ENCODE measurements at regions of chr16 and their contacts with region 1.

Region 1: GRCh38 chr16:75011634-75012307 is 12.9 kb downstream of the ZNRF1 start:
- DNase-seq: peak; percentile 92
- ATAC-seq: peak; percentile 91
- H3K4me3 ChIP-seq: peak overlapping the region; percentile 60
- H3K27ac ChIP-seq: peak overlapping the region; percentile 96
- H3K4me1 ChIP-seq: peaks cover 47% of the 10 kb centered on the region
- H3K27me3 ChIP-seq: no peaks in the 10 kb centered on the region
- CTCF ChIP-seq: no peak
- EP300 ChIP-seq: peak; percentile 89
- POLR2A ChIP-seq: peak; percentile 64
- RAD21 ChIP-seq: no peak

Region 2: DNA sequence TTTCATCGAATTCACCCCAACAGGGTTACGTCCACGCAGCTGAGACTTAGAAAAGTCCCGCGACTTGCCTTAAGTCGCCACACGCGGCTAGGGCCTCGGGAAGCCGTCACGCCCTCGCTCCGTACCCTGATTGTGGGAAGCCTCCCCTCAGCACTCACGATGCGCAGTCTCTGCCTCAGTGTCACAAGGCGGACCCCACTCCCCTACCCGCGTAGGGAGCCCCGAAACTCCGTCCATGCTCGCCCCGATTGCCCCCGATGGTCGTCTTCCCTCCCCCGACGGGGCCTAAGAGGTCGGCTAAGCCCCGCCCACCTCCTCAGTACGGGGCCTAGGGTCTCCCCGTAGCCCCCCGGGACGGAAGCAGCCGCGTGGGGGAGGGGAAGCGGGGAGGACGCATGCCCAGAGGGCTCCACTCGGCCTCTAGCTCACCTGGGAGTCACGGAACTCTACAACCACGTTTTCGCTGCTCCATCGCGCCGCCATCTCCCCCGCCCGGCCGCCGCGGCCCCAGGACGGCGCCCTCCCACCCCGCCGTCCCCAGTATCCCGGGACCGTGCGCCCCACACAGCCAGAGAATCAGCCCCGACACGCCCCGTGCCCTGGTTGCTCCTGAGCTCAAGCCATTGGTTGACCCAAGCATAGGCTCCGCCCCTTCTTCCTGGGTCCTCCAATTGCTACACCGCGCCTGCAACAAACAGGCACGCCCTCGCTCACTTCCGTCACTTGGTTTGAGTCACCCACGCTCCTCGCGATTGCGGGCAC is 27.1 kb before region 1 on chr16 and contains the start of gene WDR59:
- CTCF ChIA-PET with region 1: interaction called, 5 read pairs
- POLR2A ChIA-PET with region 1: interaction called, 10 read pairs
- RAD21 ChIA-PET with region 1: interaction called, 11 read pairs
- SMC1A ChIA-PET with region 1: interaction called, 10 read pairs
- in situ Hi-C with region 1: no loop called
- intact Hi-C with region 1: no loop called
- DNase-seq: peak; percentile 96
- ATAC-seq: peak; percentile 99
- H3K4me3 ChIP-seq: peak within 1 kb of the TSS; percentile 99
- H3K27ac ChIP-seq: peak within 1 kb of the TSS; percentile 92
- H3K4me1 ChIP-seq: no peaks in the 10 kb centered on the region; the same call in 1 of the 2 replicates
- H3K27me3 ChIP-seq: no peaks in the 10 kb centered on the region
- CTCF ChIP-seq: no peak
- EP300 ChIP-seq: no peak
- POLR2A ChIP-seq: peak; percentile 83
- RAD21 ChIP-seq: no peak
- polyA plus RNA-seq, gene WDR59: 9.7 to 11.5 TPM

Region 3: DNA sequence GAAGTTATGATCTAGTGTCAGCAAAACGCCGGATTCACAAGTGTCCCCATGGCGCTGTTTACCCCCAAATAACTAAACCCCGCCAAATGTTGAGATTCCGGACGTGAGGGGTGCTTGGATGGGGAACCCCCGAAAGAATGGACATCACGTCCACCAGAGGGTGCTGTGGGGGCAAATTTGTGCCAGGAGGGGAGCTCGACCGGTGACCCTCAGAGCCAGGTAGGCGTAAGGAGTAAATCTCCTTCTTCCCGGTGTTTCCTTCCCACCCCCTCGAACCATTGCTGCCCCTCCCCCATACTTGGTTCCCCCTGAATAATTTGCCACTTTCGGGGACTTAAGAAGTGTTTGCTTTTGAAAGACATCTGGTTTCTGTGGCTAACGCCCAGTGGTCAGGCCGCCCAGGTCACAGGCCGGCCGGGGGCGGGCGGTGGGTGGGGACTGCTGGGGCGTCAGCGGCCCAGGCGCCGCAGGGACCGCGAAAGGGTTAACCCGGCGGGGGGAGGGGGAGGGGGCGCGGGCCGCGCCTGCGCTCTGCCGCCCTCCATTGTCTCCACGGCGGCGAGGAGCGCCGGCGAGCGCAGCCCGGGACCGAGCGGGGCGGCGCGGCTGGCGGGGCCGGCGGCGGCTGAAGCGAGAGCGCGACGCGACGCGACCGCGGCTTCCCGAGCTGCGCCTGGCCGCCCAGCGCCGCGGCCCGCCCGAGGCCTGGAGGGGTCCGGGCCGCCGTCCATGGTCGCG is 13.1 kb before region 1 on chr16 and contains the start of gene ZNRF1:
- CTCF ChIA-PET with region 1: interaction called, 12 read pairs
- POLR2A ChIA-PET with region 1: interaction called, 20 read pairs
- RAD21 ChIA-PET with region 1: interaction called, 38 read pairs
- SMC1A ChIA-PET with region 1: interaction called, 43 read pairs
- in situ Hi-C with region 1: no loop called
- intact Hi-C with region 1: no loop called
- DNase-seq: peak; percentile 73
- ATAC-seq: peak; percentile 82
- H3K4me3 ChIP-seq: peak within 1 kb of the TSS; percentile 72
- H3K27ac ChIP-seq: no peak within 1 kb of the TSS
- H3K4me1 ChIP-seq: peaks cover 8% of the 10 kb centered on the region
- H3K27me3 ChIP-seq: no peaks in the 10 kb centered on the region
- CTCF ChIP-seq: peak; percentile 60 to 72 (median 62); a peak in 5 of 6 replicates
- EP300 ChIP-seq: peak; percentile 33 to 81; a peak in 3 of 4 replicates
- POLR2A ChIP-seq: peak; percentile 58
- RAD21 ChIP-seq: peak; percentile 86
- polyA plus RNA-seq, gene ZNRF1: 12.0 to 14.2 TPM

Region 4: GRCh38 chr16:75029557-75030253 is 17.9 kb after region 1 on chr16:
- CTCF ChIA-PET with region 1: interaction called, 3 read pairs
- POLR2A ChIA-PET with region 1: interaction called, 16 read pairs
- RAD21 ChIA-PET with region 1: no interaction called
- SMC1A ChIA-PET with region 1: interaction called, 5 read pairs
- in situ Hi-C with region 1: no loop called
- intact Hi-C with region 1: no loop called
- DNase-seq: no peak
- ATAC-seq: peak; percentile 32
- H3K4me3 ChIP-seq: no peak overlapping the region
- H3K27ac ChIP-seq: no peak overlapping the region
- H3K4me1 ChIP-seq: peaks cover 18% of the 10 kb centered on the region
- H3K27me3 ChIP-seq: no peaks in the 10 kb centered on the region
- CTCF ChIP-seq: no peak
- EP300 ChIP-seq: no peak
- POLR2A ChIP-seq: no peak
- RAD21 ChIP-seq: no peak

Region 5: GRCh38 chr16:75043175-75043895 is 31.6 kb after region 1 on chr16:
- CTCF ChIA-PET with region 1: interaction called, 4 read pairs
- POLR2A ChIA-PET with region 1: interaction called, 4 read pairs
- RAD21 ChIA-PET with region 1: interaction called, 5 read pairs
- SMC1A ChIA-PET with region 1: interaction called, 13 read pairs
- in situ Hi-C with region 1: no loop called
- intact Hi-C with region 1: no loop called
- DNase-seq: peak; percentile 59
- ATAC-seq: peak; percentile 93
- H3K4me3 ChIP-seq: no peak overlapping the region; the same call in 1 of the 2 replicates
- H3K27ac ChIP-seq: 0 out of 2 replicates have a peak overlapping the region, but pooled peaks have one; percentile 5
- H3K4me1 ChIP-seq: peaks cover 27% of the 10 kb centered on the region
- H3K27me3 ChIP-seq: no peaks in the 10 kb centered on the region
- CTCF ChIP-seq: no peak
- EP300 ChIP-seq: no peak
- POLR2A ChIP-seq: no peak
- RAD21 ChIP-seq: no peak

Region 6: GRCh38 chr16:75074920-75075687 is 63.3 kb after region 1 on chr16:
- CTCF ChIA-PET with region 1: interaction called, 9 read pairs
- POLR2A ChIA-PET with region 1: interaction called, 5 read pairs
- RAD21 ChIA-PET with region 1: interaction called, 3 read pairs
- SMC1A ChIA-PET with region 1: interaction called, 10 read pairs
- in situ Hi-C with region 1: no loop called
- intact Hi-C with region 1: loop called (anchors 5 kb)
- DNase-seq: peak; percentile 96
- ATAC-seq: peak; percentile 97
- H3K4me3 ChIP-seq: peak overlapping the region; percentile 41; the same call in 1 of the 2 replicates
- H3K27ac ChIP-seq: peak overlapping the region; percentile 80
- H3K4me1 ChIP-seq: peaks cover 21% of the 10 kb centered on the region
- H3K27me3 ChIP-seq: no peaks in the 10 kb centered on the region
- CTCF ChIP-seq: no peak
- EP300 ChIP-seq: peak; percentile 16 to 22; a peak in 2 of 4 replicates
- POLR2A ChIP-seq: peak; percentile 58
- RAD21 ChIP-seq: 0 out of 2 replicates have a peak, but pooled peaks have one; percentile 18

Region 7: GRCh38 chr16:75130150-75130771 is 118.5 kb after region 1 on chr16:
- CTCF ChIA-PET with region 1: no interaction called
- POLR2A ChIA-PET with region 1: no interaction called
- RAD21 ChIA-PET with region 1: no interaction called
- SMC1A ChIA-PET with region 1: no interaction called
- in situ Hi-C with region 1: no loop called
- intact Hi-C with region 1: no loop called
- DNase-seq: no peak
- ATAC-seq: no peak
- H3K4me3 ChIP-seq: no peak overlapping the region
- H3K27ac ChIP-seq: no peak overlapping the region
- H3K4me1 ChIP-seq: no peaks in the 10 kb centered on the region
- H3K27me3 ChIP-seq: peaks cover 0 to 2% of the 10 kb centered on the region in 2 experiments; a peak in 1 of 4 replicates
- CTCF ChIP-seq: 0 out of 6 replicates have a peak, but pooled peaks of 1 of the 3 experiments have one; percentile 5
- EP300 ChIP-seq: no peak
- POLR2A ChIP-seq: no peak
- RAD21 ChIP-seq: 0 out of 2 replicates have a peak, but pooled peaks have one; percentile 18

Region 8: DNA sequence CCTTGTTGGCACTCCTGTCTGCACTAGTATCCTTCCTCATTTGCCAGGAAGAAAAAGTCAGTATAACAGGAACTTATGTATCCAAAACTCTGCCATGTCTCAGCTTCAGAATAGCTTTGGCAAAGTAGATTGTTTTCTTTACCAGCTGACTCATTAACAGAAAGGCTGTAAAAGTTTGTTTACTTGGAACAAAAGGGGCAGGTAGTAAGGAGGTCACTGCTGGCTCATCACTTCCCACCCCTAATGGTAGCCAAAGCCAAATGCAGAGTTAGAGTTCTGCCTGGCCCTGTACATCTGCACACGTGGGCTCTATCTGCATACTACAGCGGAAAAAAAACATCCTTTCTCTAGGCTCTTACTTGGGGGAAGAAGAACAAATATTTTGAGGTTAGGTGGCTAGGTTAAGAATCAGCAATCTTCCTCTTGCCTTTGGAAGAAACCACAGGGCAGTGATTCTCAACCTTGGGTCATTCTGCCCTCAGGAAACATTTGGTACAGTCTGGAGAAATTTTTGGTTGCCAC is 330.6 kb after region 1 on chr16:
- CTCF ChIA-PET with region 1: no interaction called
- POLR2A ChIA-PET with region 1: no interaction called
- RAD21 ChIA-PET with region 1: no interaction called
- SMC1A ChIA-PET with region 1: no interaction called
- in situ Hi-C with region 1: no loop called
- intact Hi-C with region 1: no loop called
- DNase-seq: no peak
- ATAC-seq: no peak
- H3K4me3 ChIP-seq: no peak overlapping the region
- H3K27ac ChIP-seq: no peak overlapping the region
- H3K4me1 ChIP-seq: no peaks in the 10 kb centered on the region
- H3K27me3 ChIP-seq: no peaks in the 10 kb centered on the region
- CTCF ChIP-seq: no peak
- EP300 ChIP-seq: no peak
- POLR2A ChIP-seq: no peak
- RAD21 ChIP-seq: no peak

Measured in GM12878 (cell line).